ENCODE measurements at regions of chr3 and their contacts with region 1.

Region 1: GRCh38 chr3:187738331-187739093 is 6.8 kb downstream of the BCL6 start:
- DNase-seq: peak; percentile 90 to 93
- ATAC-seq: peak; percentile 80
- H3K4me3 ChIP-seq: peak overlapping the region; percentile 1 to 69
- H3K27ac ChIP-seq: peak overlapping the region; percentile 46 to 62
- H3K4me1 ChIP-seq: peaks cover 0 to 3% of the 10 kb centered on the region in 2 donors
- H3K27me3 ChIP-seq: no peaks in the 10 kb centered on the region

Region 2: DNA sequence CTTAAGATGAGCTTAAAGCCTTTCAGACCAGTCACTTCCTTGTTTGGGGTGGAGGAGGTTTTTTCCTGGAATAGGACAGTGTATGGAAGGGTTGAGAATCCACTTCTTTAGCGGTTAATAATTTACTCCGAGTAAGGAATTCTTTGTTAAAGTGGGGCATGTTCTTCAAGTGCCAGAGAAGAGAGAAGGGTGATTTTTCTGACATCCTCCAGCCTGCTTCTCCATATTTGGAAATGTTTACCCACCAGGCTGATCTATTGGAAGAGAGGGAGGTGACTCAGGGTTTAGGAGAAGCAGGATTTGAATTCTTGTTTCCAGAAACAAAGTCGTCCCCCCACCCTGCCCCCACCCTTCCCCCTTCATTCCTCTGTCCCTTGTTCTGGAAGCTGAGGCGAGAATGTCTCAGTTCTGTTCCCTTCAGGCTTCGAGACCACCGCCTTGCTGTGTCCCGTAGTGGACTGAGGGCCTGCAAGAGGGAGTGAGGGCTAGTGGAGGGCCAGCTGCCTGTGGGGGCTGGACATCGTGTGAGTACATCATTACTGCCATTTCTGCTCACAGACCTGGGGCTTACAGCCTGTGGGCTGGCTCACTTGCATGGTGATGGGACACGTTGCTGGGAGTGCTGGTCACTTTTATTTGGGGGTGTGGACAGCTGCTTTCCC is 473.9 kb after region 1 on chr3:
- intact Hi-C with region 1: loop called (anchors 5 to 10 kb)
- DNase-seq: peak; percentile 63 to 82
- ATAC-seq: peak; percentile 64
- H3K4me3 ChIP-seq: peak overlapping the region; percentile 79 to 99
- H3K27ac ChIP-seq: peak overlapping the region; percentile 100
- H3K4me1 ChIP-seq: peaks cover 8 to 15% of the 10 kb centered on the region in 2 donors
- H3K27me3 ChIP-seq: no peaks in the 10 kb centered on the region

Region 3: DNA sequence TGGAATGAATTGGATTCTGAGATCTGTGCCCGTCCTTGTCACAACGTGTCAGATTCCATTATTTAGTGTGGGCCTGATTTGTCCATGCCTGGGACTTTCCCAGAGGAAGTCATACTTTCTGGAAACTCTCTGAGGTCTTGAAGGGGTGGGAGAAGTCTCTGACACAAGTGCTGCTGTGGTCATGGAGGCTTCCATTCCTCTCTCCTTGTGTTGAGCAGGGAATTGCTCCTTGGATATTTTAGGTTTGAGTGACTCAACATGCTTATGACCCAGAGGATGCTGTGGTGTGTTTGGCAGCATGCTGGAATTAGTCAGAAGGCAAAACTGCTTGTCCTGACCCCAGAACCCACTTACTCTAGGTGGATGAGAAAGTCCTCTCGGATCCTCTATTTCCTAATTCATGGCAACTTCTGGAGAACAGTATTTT is 547.6 kb after region 1 on chr3:
- intact Hi-C with region 1: loop called in 1 of 2 experiments (anchors 5 kb)
- DNase-seq: peak in 1 of 2 donors; percentile 75
- ATAC-seq: peak; percentile 88
- H3K4me3 ChIP-seq: no peak overlapping the region
- H3K27ac ChIP-seq: peak overlapping the region; percentile 64 to 80
- H3K4me1 ChIP-seq: peaks cover 10 to 30% of the 10 kb centered on the region in 2 donors
- H3K27me3 ChIP-seq: no peaks in the 10 kb centered on the region

Region 4: GRCh38 chr3:188683032-188683521 is 944.6 kb after region 1 on chr3:
- intact Hi-C with region 1: loop called (anchors 10 kb)
- DNase-seq: peak in 1 of 2 donors; percentile 69
- ATAC-seq: peak; percentile 76
- H3K4me3 ChIP-seq: no peak overlapping the region
- H3K27ac ChIP-seq: peak overlapping the region in 1 of 2 donors; percentile 32
- H3K4me1 ChIP-seq: peaks cover 13 to 34% of the 10 kb centered on the region in 2 donors
- H3K27me3 ChIP-seq: no peaks in the 10 kb centered on the region

Region 5: DNA sequence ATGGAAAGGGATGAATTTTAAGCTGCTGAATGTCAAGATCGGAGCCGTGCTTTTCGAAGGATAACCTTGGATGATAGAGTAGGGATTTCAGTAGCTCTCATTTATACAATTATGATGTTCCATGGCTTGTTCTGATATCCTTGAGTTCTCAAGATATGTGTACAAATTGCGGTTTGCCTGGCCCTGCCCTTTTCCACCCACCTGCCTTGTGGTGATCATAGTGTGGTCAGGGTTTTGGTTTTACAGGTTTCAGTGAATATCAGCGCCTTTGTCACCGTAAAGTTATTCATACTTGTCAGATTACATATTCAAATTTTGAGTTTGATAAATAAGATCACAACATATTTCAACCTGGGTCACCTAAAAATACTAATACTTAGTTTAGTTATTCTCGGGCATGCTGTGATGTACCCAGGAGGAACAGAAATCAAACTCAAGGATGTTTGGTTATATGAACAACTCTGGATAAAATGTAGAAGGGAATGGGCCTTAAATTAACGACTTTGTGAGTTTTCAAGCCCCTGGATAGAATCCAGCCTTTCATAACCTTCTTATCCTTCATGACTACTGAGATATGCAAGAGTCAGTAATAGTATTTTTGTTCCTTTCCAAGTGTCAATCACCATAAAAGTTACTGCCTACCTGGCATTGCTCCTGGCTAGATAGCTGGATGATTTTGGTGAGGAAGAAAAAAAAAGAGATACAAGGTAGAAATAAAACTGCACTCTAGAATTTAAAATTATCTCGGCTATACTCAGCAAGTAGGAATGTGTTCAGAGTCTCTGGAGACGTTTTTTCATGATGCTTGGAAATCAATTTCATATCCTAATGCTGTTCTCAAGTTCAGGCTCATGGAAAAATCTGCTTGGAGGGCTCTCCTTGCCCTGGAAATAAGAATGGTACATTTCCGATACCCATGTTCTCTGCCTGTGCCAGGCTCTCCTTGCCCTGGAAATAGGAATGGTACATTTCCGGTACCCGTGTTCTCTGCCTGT is 1224.0 kb after region 1 on chr3:
- intact Hi-C with region 1: loop called in 1 of 2 experiments (anchors 5 kb)
- DNase-seq: no peak
- ATAC-seq: peak; percentile 41
- H3K4me3 ChIP-seq: no peak overlapping the region
- H3K27ac ChIP-seq: no peak overlapping the region
- H3K4me1 ChIP-seq: no peaks in the 10 kb centered on the region
- H3K27me3 ChIP-seq: no peaks in the 10 kb centered on the region

Measured in aorta (tissue), 5 donors.